Heart right ventricle (tissue), 16 donors: ENCODE measurements at regions of chr4 and their contacts with region 1.

Region 1: DNA sequence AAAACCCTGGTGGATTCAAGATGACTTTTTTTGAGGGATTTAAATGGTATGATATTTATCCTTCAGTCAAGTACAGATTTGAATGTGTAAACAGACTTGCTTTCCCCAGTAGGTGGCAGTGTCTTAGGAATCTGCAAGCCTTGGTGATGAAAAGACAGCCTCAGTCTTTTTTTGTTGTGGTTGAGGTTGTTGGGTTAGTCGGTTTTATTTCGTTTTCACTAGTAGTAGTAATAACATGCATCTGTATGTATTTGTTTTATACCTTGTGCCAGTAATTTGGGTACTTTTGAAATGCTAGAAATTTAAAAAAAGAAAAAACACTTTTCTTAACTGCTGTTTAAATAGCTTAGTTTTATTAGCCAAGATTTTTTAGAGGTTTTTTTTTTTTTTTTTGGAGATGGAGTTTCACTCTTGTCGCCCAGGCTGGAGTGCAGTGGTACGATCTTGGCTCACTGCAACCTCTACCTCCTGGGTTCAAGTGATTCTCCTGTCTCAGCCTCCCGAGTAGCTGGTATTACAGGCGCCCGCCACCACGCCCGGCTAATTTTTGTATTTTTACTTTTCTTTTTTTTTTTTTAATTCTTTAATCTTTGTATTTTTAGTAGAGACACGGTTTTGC is 39.2 kb downstream of the COPS4 start:
- DNase-seq: peak in 1 of 2 donors; percentile 25
- ATAC-seq: peak in 3 of 8 donors; percentile 50 to 59 (median 56)
- H3K4me3 ChIP-seq: no peak overlapping the region
- H3K27ac ChIP-seq: no peak overlapping the region
- H3K4me1 ChIP-seq: peaks cover 0 to 16% (median 0%) of the 10 kb centered on the region in 9 donors
- H3K27me3 ChIP-seq: no peaks in the 10 kb centered on the region
- CTCF ChIP-seq: peak; percentile 31 to 76 (median 70)

Region 2: DNA sequence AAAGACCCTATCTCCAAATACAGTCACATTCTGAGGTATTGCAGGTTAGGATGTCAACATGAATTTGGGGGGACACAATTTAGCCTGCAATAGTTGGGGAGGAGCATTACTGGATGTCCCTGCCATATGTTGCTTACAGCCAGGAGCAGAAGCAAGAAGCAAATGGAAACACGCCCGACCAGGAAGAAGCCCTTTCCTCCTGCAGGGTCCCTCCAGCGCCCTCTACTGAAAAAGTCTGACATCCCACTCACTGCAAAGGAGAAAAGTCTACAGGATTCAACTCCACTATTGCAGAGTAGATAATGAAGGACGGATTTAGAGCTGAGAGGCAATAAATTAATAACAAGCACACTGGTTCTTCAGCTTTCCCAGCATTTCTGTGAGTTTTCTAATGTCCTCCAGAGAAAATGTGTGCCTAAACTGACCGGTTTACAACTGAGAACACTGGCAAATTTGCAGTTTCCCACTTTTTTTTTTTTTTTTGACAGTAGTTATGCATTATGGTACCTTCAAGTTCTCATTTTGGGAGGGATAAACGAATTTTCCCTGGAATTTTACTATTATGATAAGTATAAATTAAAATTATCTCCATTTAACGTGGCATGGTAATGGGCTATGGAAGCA is 178.7 kb after region 1 on chr4:
- intact Hi-C with region 1: loop called in 6 of 10 experiments (anchors 5 to 10 kb)
- DNase-seq: peak in 1 of 2 donors; percentile 58
- ATAC-seq: peak in 5 of 8 donors; percentile 41 to 66 (median 59)
- H3K4me3 ChIP-seq: no peak overlapping the region
- H3K27ac ChIP-seq: no peak overlapping the region
- H3K4me1 ChIP-seq: peaks cover 0 to 28% (median 2%) of the 10 kb centered on the region in 9 donors
- H3K27me3 ChIP-seq: no peaks in the 10 kb centered on the region
- CTCF ChIP-seq: peak in 8 of 9 donors; percentile 14 to 82 (median 54)

Region 3: GRCh38 chr4:83261307-83261706 is 187.1 kb after region 1 on chr4:
- intact Hi-C with region 1: loop called in 8 of 10 experiments (anchors 2 to 10 kb)
- DNase-seq: no peak
- ATAC-seq: no peak
- H3K4me3 ChIP-seq: no peak overlapping the region
- H3K27ac ChIP-seq: no peak overlapping the region
- H3K4me1 ChIP-seq: peaks cover 0 to 22% (median 5%) of the 10 kb centered on the region in 9 donors
- H3K27me3 ChIP-seq: no peaks in the 10 kb centered on the region
- CTCF ChIP-seq: no peak

Region 4: GRCh38 chr4:83284193-83285054 is 210.2 kb after region 1 on chr4 and contains the start of gene COQ2:
- intact Hi-C with region 1: loop called in 1 of 10 experiments (anchors 5 kb)
- DNase-seq: peak; percentile 96 to 97
- ATAC-seq: peak; percentile 96 to 99 (median 98)
- H3K4me3 ChIP-seq: peak within 1 kb of the TSS; percentile 45 to 81 (median 67)
- H3K27ac ChIP-seq: peak within 1 kb of the TSS; percentile 91 to 99 (median 96)
- H3K4me1 ChIP-seq: peaks cover 0 to 36% (median 10%) of the 10 kb centered on the region in 9 donors
- H3K27me3 ChIP-seq: no peaks in the 10 kb centered on the region
- CTCF ChIP-seq: peak; percentile 14 to 65 (median 36)
- total RNA-seq, gene COQ2: 17.8 to 32.8 (median 26.5) TPM

Region 5: DNA sequence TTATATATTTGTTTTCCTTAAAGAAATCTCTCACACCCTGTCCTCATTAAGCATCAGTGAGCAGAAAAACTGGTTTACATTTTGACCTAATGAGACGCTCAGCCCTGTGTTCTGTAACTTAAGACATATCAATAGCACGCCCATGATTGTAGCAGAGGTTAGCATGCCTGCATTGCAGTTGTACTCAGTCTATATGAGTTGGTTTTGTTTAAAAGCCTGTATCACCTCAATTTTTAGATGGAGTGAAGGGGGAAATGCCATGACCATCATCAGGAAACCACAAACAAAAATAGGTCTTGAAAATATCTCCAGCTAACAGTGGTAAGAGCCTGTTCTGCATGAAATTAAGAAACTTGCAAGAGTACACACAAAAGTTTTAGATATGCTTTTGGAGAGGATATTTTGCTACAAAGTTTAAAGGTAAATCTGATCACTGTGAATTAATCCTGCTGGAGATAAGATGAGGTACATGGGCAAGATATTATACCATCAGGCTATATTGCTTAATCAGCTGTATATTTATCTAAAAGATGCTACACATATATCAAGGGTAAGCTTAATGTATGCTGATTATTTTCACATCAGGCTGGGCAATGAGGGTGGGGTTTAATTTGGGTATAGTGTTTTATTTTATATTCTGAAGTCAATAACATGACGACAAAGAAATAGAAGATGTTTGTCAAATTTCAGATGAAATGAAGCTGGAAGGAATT is 223.5 kb after region 1 on chr4:
- intact Hi-C with region 1: no loop called
- DNase-seq: no peak
- ATAC-seq: no peak
- H3K4me3 ChIP-seq: no peak overlapping the region
- H3K27ac ChIP-seq: no peak overlapping the region
- H3K4me1 ChIP-seq: peaks cover 0 to 5% (median 0%) of the 10 kb centered on the region in 9 donors
- H3K27me3 ChIP-seq: peaks cover 0 to 19% (median 0%) of the 10 kb centered on the region in 7 donors
- CTCF ChIP-seq: no peak